ENCODE measurements at regions of chr17 and their contacts with region 1.

Region 1: DNA sequence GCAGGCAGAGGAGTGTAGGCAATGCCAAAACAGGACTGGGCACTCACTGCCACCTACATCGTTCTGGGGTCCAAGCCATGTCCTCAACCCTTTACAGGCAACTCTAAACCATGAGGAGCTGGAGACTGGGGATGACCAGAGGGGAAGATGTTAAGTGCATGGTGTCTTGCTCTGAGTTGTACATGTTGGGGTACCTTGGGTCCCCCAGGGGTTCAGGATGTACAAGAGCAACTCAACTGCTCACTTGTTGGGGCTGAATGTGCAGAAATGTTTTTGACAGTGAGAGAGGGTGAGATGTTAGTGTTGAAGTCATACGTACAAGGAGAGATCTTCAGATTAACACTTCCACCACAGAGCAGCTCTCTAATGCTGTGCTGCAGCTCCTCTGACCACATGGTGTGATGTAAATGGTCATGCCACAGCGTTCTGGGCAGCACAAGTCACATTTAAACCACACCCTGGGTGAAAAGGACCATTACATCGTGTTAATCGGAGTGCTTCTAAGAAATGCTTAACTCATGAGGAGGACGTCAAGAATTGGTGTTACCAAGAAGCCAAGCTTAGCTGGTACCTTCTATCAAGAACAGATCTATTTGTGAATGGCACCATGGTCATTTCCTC is 2.4 kb downstream of the CCL18 start:
- DNase-seq: no peak
- H3K4me3 ChIP-seq: no peak overlapping the region
- H3K27ac ChIP-seq: no peak overlapping the region
- H3K4me1 ChIP-seq: no peaks in the 10 kb centered on the region
- H3K27me3 ChIP-seq: no peaks in the 10 kb centered on the region
- CTCF ChIP-seq: no peak
- EP300 ChIP-seq: no peak
- POLR2A ChIP-seq: no peak

Region 2: DNA sequence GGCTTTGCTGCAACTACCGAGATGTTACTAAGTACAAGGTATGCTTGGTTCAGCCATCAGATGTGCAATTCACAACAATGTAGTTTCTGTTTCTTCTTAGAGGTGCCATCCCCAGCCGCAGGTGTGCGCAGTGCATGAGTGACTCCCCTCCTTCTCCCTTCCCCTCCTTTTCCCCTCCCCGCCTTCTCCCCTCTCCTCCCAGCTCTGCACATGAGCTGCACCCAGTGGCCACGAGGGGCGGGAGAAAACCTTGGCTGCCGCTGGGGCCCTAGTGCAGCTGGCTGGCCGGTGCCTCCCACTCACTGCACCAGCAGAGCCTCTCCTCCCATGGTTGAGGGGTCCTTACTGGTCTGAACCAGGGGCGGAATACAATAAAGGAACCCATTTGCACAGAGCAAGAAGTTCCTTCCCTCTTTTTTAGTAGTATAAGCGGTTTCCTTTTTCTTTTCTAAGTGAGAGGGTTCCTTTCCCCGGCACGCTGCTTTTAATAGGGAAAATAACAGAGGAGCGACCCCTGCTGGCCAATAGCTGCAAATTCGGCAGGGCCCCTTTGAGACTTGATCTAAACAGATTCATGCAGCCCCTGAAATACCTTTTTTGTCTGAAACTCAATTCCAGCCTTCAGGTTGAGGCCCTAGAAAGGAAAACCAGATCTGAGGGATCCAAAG is 57.3 kb before region 1 on chr17:
- intact Hi-C with region 1: no loop called
- DNase-seq: no peak
- H3K4me3 ChIP-seq: no peak overlapping the region
- H3K27ac ChIP-seq: no peak overlapping the region
- H3K4me1 ChIP-seq: no peaks in the 10 kb centered on the region
- H3K27me3 ChIP-seq: no peaks in the 10 kb centered on the region
- CTCF ChIP-seq: no peak
- EP300 ChIP-seq: no peak
- POLR2A ChIP-seq: no peak

Region 3: DNA sequence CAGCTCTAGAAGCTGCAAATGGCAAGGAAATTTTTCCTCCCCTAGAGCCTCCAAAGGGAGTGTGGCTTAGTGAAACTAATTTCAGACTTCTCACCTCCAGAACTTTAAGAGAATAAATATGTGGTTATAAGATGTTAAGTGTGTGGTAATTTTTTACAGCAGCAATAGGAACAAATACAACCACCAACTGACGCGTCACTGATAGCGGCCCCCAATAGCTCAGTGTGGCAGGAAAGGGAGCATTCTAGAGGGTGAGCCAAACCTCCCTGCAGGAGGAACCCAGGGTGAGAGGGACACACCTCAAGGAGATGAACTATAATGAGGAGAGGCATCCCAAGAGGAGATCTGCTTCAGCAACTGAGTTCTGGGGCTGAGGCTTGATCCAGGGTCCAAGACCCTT is 41.2 kb after region 1 on chr17:
- intact Hi-C with region 1: no loop called
- DNase-seq: no peak
- H3K4me3 ChIP-seq: no peak overlapping the region
- H3K27ac ChIP-seq: no peak overlapping the region
- H3K4me1 ChIP-seq: no peaks in the 10 kb centered on the region
- H3K27me3 ChIP-seq: no peaks in the 10 kb centered on the region
- CTCF ChIP-seq: no peak
- EP300 ChIP-seq: no peak
- POLR2A ChIP-seq: no peak

Region 4: DNA sequence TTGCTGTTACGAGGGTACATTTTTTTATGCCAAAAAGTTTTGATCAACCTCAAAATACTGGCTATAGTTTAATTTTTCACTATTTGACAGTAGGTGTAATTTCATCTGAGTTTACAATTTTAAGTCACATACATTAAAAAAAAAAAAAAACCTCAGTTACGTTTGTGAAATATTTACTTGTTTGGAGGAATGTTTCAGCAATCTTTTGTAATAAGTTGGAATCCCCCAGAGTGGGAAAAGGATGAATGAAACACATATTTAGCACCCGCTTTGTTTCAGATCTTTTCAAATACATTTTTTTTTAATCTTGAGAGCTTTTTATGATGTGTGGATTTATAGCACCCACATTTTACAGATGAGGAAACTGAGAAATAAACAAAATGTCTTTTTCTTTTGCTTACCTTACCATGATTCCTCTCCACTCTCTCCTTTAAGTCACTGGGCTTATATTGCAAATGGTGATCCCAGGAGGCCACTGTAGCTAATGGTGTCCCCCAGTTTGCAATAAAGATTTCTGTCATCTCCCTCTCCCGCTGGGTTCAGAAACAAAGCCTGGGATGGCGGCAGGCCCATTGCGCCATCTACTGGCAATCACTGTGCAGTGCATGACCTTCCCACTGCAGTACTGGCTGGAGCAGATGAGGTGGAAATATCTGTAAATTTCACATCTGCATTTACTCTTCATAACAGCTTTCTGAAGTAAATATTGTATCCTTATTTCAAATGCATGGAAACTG is 82.3 kb after region 1 on chr17:
- intact Hi-C with region 1: loop called in 1 of 4 experiments (anchors 10 kb)
- DNase-seq: peak; percentile 21 to 73 (median 55)
- H3K4me3 ChIP-seq: no peak overlapping the region
- H3K27ac ChIP-seq: no peak overlapping the region
- H3K4me1 ChIP-seq: no peaks in the 10 kb centered on the region
- H3K27me3 ChIP-seq: no peaks in the 10 kb centered on the region
- CTCF ChIP-seq: peak; percentile 50 to 77 (median 52)
- EP300 ChIP-seq: no peak
- POLR2A ChIP-seq: no peak

Measured in ovary (tissue), 10 donors.